ENCODE measurements at regions of chr4 and their contacts with region 1.

Region 1: DNA sequence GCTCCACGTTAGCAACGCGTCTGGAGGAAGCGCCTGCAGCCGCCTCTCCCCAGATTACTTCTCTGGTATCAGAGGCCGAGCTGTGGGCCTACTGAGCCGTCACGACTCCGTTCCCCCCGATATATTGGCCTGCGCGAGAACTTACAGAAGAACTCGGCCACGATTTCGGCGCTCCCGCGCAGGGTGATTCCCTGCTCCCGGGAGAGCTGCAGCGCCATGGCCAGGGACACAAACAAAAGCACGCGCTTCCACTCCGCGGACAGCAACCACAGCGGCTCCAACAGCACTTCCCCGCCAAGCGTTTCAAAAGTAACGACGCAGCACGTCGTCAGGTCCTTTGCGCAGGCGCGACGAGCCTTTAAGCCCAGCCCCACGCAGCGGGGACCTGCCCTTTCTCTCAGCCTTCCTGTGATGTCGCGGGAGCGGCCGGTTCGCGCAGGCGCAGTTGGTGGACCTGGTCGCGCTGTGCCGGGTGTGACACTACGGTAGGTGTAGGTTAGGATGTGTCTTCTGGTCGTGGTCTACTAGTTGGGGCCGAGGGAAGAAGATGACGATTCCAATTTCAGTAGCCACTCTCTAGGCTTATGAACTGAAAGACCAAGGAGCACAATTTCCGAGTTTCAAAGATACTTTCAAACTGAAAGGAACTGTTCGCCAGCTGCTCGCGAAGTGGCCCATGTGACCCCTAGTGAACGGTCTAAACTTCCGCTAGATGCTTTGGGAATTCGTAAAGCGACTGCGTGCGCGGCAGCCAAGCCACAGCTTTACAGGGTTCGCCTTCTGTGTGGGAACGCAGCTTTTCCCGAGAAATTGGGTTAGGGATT is at the start of gene MAD2L1:
- DNase-seq: peak; percentile 97 to 99 (median 98)
- ATAC-seq: peak; percentile 95
- H3K4me3 ChIP-seq: peak within 1 kb of the TSS; percentile 92
- H3K4me3 Mint-ChIP-seq: peak within 1 kb of the TSS; percentile 88 to 99 (median 96)
- H3K27ac ChIP-seq: peak within 1 kb of the TSS; percentile 95
- H3K27ac Mint-ChIP-seq: peak within 1 kb of the TSS; percentile 93 to 99 (median 99)
- H3K4me1 ChIP-seq: peaks cover 24 to 33% of the 10 kb centered on the region in 2 donors
- H3K4me1 Mint-ChIP-seq: peaks cover 24 to 76% (median 66%) of the 10 kb centered on the region in 7 donors
- H3K27me3 ChIP-seq: no peaks in the 10 kb centered on the region
- H3K27me3 Mint-ChIP-seq: peaks cover 0 to 3% (median 0%) of the 10 kb centered on the region in 5 donors
- total RNA-seq, gene MAD2L1: 5.1 to 44.0 (median 7.6) TPM

Region 2: GRCh38 chr4:119300101-119300978 is 766.4 kb before region 1 on chr4:
- CTCF ChIA-PET with region 1: no interaction called
- POLR2A ChIA-PET with region 1: no interaction called
- intact Hi-C with region 1: loop called (anchors 1 kb)
- DNase-seq: peak; percentile 84 to 94 (median 88)
- ATAC-seq: peak; percentile 97
- H3K4me3 ChIP-seq: peak overlapping the region; percentile 93
- H3K4me3 Mint-ChIP-seq: peak overlapping the region; percentile 92 to 100 (median 96)
- H3K27ac ChIP-seq: peak overlapping the region; percentile 90
- H3K27ac Mint-ChIP-seq: peak overlapping the region; percentile 98 to 100 (median 100)
- H3K4me1 ChIP-seq: peaks cover 5 to 22% of the 10 kb centered on the region in 2 donors
- H3K4me1 Mint-ChIP-seq: peaks cover 16 to 49% (median 43%) of the 10 kb centered on the region in 7 donors
- H3K27me3 ChIP-seq: no peaks in the 10 kb centered on the region
- H3K27me3 Mint-ChIP-seq: peaks cover 0 to 5% (median 0%) of the 10 kb centered on the region in 5 donors

Region 3: DNA sequence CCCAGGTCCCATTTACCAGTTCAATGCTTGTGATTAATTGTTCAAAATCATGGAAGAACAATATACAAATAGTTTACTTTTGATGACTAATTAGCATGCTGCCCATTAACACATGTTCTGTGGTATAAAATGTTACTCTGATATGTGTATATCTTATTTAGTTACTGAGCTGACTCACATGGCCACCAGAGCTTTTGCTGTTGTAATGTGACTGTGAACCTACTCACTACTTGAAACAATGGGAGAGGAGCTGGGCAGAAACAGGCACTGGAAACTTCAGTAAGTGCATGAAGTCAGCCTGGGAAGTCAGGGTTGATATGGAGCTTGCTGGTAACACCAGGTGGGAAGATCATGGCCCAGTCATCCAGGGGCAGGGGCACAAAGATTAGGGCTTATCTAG is 72.7 kb after region 1 on chr4:
- CTCF ChIA-PET with region 1: no interaction called
- POLR2A ChIA-PET with region 1: no interaction called
- intact Hi-C with region 1: no loop called
- DNase-seq: no peak
- ATAC-seq: peak; percentile 29
- H3K4me3 ChIP-seq: no peak overlapping the region
- H3K4me3 Mint-ChIP-seq: no peak overlapping the region
- H3K27ac ChIP-seq: no peak overlapping the region
- H3K27ac Mint-ChIP-seq: no peak overlapping the region
- H3K4me1 ChIP-seq: no peaks in the 10 kb centered on the region
- H3K4me1 Mint-ChIP-seq: peaks cover 0 to 4% (median 0%) of the 10 kb centered on the region in 7 donors
- H3K27me3 ChIP-seq: no peaks in the 10 kb centered on the region
- H3K27me3 Mint-ChIP-seq: peaks cover 0 to 9% (median 4%) of the 10 kb centered on the region in 5 donors

Region 4: GRCh38 chr4:120238277-120238973 is 171.7 kb after region 1 on chr4:
- CTCF ChIA-PET with region 1: no interaction called
- POLR2A ChIA-PET with region 1: no interaction called
- intact Hi-C with region 1: loop called in 1 of 2 experiments (anchors 5 kb)
- DNase-seq: no peak
- ATAC-seq: no peak
- H3K4me3 ChIP-seq: no peak overlapping the region
- H3K4me3 Mint-ChIP-seq: no peak overlapping the region
- H3K27ac ChIP-seq: no peak overlapping the region
- H3K27ac Mint-ChIP-seq: no peak overlapping the region
- H3K4me1 ChIP-seq: no peaks in the 10 kb centered on the region
- H3K4me1 Mint-ChIP-seq: no peaks in the 10 kb centered on the region
- H3K27me3 ChIP-seq: peaks cover 0 to 3% of the 10 kb centered on the region in 2 donors
- H3K27me3 Mint-ChIP-seq: peaks cover 0 to 12% (median 0%) of the 10 kb centered on the region in 5 donors

Region 5: DNA sequence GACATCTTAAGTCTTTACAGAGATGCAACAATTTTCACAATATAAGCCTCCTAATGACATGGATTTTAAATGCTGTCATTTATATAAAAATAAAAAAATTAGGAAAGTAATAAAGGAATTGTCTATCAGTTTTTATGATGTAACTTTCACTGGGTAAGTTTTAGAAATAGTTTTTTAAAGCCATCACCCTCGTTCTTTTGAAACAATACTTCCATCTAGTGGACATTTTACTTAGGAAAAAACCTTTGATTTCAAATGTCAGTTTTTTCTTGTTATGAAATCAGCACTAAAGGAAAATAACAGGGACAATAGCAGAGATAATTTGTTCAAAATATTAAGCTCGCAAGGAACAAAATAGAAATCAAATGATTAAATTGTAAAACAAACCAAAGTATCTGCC is 1029.9 kb after region 1 on chr4:
- CTCF ChIA-PET with region 1: no interaction called
- POLR2A ChIA-PET with region 1: no interaction called
- intact Hi-C with region 1: loop called (anchors 1 kb)
- DNase-seq: peak in 5 of 9 donors; percentile 29 to 52 (median 41)
- ATAC-seq: no peak
- H3K4me3 ChIP-seq: no peak overlapping the region
- H3K4me3 Mint-ChIP-seq: no peak overlapping the region
- H3K27ac ChIP-seq: no peak overlapping the region
- H3K27ac Mint-ChIP-seq: no peak overlapping the region
- H3K4me1 ChIP-seq: no peaks in the 10 kb centered on the region
- H3K4me1 Mint-ChIP-seq: peaks cover 0 to 5% (median 0%) of the 10 kb centered on the region in 7 donors
- H3K27me3 ChIP-seq: no peaks in the 10 kb centered on the region
- H3K27me3 Mint-ChIP-seq: peaks cover 0 to 30% (median 0%) of the 10 kb centered on the region in 5 donors

Region 6: GRCh38 chr4:121696581-121697461 is 1630.1 kb after region 1 on chr4 and contains the start of gene ANXA5:
- CTCF ChIA-PET with region 1: no interaction called
- POLR2A ChIA-PET with region 1: no interaction called
- intact Hi-C with region 1: loop called in 1 of 2 experiments (anchors 1 kb)
- DNase-seq: peak; percentile 8 to 85 (median 41)
- ATAC-seq: peak; percentile 92
- H3K4me3 ChIP-seq: peak within 1 kb of the TSS; percentile 87
- H3K4me3 Mint-ChIP-seq: peak within 1 kb of the TSS; percentile 94 to 99 (median 97)
- H3K27ac ChIP-seq: peak within 1 kb of the TSS; percentile 39
- H3K27ac Mint-ChIP-seq: peak within 1 kb of the TSS; percentile 67 to 99 (median 87)
- H3K4me1 ChIP-seq: peaks cover 4 to 13% of the 10 kb centered on the region in 2 donors
- H3K4me1 Mint-ChIP-seq: peaks cover 12 to 43% (median 19%) of the 10 kb centered on the region in 7 donors
- H3K27me3 ChIP-seq: no peaks in the 10 kb centered on the region
- H3K27me3 Mint-ChIP-seq: peaks cover 0 to 43% (median 28%) of the 10 kb centered on the region in 5 donors
- total RNA-seq, gene ANXA5: 25.5 to 180 (median 49.5) TPM

Measured in naive thymus-derived CD4-positive, alpha-beta T cell (primary cell).